Activated CD8-positive, alpha-beta T cell treated with anti-CD3 and anti-CD28 coated beads, Interleukin-2, amount 10 ng/mL, durations not matched to agents 7 days and 5 days (primary cell): ENCODE measurements at regions of chr17 and their contacts with region 1.

Region 1: DNA sequence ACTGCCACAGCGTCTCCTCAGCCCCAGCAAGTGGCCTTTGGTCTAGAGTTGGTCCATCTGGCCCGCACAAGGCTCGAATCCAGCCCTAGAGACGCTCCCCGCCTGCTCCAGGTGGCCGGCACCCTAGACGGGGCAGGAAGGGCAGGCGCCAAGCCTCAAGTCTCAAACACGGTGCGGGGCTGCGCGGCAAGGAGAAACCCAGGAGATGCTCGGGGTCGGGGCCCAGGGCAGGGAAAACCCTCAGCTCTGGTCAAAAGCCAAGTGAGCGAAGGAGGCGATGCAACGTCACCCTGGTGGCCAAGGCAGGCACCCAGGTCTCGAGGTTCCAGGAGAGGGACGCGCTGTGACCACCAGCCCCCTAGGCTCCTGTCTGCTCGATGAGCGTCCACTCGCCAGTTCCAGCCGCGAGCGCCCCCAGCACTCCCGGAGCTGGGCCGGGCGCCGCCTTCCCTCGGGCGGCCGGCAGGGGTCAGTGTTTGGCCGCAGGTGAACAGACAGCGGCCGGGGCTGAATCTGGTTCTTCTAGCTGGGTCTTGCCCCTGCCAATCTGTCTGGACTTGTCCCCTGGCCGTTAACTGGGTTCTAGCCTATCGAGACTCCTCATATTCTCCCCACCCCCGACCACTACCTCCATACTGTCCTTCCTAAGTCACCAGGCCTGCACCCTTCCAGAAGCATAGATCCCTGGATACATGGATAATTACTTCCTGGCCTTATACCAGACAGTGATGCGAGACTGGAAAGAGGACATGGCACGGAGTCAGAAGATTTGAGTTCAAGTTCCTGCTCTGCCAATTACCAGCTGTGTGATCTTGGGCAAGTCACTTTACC is 44.0 kb downstream of the PRAC1 start:
- DNase-seq: peak; percentile 76
- ATAC-seq: peak; percentile 96
- H3K4me3 Mint-ChIP-seq: no peak overlapping the region
- H3K27ac Mint-ChIP-seq: no peak overlapping the region
- H3K4me1 Mint-ChIP-seq: peaks cover 2% of the 10 kb centered on the region
- H3K27me3 Mint-ChIP-seq: peaks cover 54% of the 10 kb centered on the region

Region 2: GRCh38 chr17:48500966-48501426 is 177.4 kb before region 1 on chr17:
- CTCF ChIA-PET with region 1: no interaction called
- POLR2A ChIA-PET with region 1: no interaction called
- DNase-seq: no peak
- ATAC-seq: no peak
- H3K4me3 Mint-ChIP-seq: no peak overlapping the region
- H3K27ac Mint-ChIP-seq: no peak overlapping the region
- H3K4me1 Mint-ChIP-seq: peaks cover 19% of the 10 kb centered on the region
- H3K27me3 Mint-ChIP-seq: peaks cover 40% of the 10 kb centered on the region

Region 3: DNA sequence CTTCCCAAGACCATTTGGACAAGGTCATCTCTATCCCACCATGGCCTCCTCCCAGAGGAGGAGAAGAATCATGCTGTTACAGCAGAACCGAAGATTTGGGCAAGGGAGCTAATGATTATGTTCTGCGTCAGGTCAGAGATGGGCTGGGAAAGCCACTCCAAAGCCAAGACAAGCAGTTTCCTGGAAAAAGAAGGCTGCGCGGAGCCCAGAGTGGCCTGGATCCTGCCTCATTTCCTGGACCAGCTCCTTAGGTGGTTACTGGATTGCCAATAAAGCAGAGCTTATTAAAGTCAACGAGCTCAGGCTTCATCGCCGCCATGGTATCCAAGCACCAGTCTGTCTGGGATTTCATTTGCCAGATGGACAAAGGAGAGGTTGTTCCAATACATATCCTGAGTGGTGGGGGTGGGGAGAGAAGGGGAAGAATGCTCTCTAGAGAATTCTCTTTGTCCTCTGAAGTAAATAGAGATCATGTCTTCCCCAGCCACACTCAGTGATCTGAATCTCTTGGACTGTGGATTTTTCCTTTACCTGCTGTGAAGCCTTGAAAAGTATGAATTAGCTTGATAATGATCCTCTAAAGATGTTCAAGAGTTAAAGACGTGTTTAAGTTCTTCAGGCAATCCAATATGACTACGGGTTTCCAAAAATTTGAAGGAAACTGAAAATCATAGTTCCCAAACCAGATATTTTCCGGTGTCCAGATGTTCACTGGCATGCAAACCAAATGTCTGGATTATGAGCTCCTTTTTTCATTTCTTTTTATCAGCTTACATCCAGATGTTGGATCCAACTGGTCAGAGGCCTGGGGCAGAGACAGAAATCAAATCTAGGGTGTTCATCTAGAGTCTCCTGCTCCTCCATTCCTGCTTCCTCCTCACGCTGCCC is 26.2 kb after region 1 on chr17:
- CTCF ChIA-PET with region 1: interaction called, 35 read pairs
- POLR2A ChIA-PET with region 1: no interaction called
- DNase-seq: no peak
- ATAC-seq: no peak
- H3K4me3 Mint-ChIP-seq: no peak overlapping the region
- H3K27ac Mint-ChIP-seq: no peak overlapping the region
- H3K4me1 Mint-ChIP-seq: no peaks in the 10 kb centered on the region
- H3K27me3 Mint-ChIP-seq: peaks cover 63% of the 10 kb centered on the region

Region 4: DNA sequence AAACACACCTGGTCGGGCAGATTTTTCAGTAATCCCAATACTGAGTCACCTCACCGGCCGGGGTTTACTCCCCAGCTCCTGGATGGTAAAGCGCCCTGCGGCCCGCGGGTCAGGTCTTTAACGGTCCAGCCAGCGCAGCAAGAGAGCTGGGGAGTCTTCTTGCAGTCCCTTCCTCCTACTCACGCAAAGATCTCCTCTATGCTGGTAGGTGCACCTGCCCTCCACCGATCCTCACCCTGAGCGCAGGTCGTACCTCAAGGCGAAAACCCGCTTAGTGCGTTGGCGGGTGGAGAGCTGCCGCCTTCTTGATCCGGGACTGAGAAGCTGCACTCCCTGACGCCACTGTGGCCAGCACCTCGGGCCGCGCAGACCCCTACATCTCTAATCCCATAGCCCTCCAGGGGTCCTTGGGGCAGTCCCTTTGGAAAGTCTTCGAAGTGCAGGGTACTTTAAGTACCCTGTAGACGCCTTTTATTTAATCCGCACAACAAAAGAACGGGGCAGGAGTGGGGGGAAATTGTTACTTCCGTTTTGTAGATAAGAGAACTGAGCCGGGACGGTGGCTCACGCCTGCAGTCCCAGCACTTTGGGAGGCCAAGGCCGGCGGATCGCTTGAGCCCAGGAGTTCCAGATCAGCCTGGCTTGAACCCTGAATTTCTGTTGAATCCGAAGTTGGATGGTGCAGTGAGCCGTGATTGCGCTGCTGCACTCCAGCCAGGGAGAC is 60.6 kb after region 1 on chr17:
- CTCF ChIA-PET with region 1: interaction called, 20 read pairs
- POLR2A ChIA-PET with region 1: no interaction called
- DNase-seq: no peak
- ATAC-seq: no peak
- H3K4me3 Mint-ChIP-seq: peak overlapping the region; percentile 40
- H3K27ac Mint-ChIP-seq: no peak overlapping the region
- H3K4me1 Mint-ChIP-seq: peaks cover 8% of the 10 kb centered on the region
- H3K27me3 Mint-ChIP-seq: peaks cover 87% of the 10 kb centered on the region

Region 5: DNA sequence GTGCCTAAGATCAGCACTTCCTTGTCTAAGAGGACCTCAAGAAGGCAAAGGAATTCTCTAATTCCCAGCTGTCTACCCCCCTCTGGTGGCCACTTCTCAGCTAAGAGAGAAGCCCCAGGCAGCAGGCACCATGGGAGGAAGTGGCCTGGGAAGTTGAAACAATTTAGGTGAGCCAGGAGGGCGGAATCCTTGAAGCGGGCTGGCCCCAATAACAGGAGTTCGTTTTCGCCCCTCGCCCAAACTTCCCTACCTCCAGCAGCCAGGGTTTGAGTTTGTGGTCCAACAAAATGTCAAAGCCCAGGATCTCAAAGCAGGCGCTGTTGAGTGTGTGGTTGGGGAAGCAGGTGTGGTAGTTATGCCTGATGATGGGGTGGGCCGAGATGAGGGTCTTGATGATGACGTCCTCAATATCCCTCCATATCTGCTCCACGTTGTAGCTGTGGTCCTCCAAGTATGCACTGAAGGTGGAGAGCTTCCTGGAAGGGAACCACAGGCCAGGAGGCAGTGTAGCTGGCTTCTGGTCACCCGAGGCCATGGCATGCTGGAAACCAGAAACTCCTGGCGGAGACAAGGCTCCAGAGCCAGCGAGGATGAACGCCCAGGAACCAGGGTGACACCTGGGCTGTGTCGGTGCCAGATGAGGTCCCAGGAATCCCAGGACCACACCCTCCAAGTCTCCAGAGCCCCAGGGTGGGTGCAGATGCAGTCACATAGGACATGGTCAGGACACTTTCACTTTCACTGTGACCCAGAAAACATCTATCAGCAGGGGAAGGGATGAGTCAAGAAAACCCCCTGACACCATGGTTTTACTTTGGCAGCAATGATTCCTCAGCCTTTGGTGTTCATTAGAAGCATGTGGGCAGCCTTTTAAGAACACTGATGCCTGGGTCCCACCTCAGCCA is 113.0 kb after region 1 on chr17:
- CTCF ChIA-PET with region 1: interaction called, 37 read pairs
- POLR2A ChIA-PET with region 1: no interaction called
- DNase-seq: peak; percentile 45
- ATAC-seq: peak; percentile 74
- H3K4me3 Mint-ChIP-seq: no peak overlapping the region
- H3K27ac Mint-ChIP-seq: no peak overlapping the region
- H3K4me1 Mint-ChIP-seq: peaks cover 18% of the 10 kb centered on the region
- H3K27me3 Mint-ChIP-seq: peaks cover 29% of the 10 kb centered on the region

Region 6: DNA sequence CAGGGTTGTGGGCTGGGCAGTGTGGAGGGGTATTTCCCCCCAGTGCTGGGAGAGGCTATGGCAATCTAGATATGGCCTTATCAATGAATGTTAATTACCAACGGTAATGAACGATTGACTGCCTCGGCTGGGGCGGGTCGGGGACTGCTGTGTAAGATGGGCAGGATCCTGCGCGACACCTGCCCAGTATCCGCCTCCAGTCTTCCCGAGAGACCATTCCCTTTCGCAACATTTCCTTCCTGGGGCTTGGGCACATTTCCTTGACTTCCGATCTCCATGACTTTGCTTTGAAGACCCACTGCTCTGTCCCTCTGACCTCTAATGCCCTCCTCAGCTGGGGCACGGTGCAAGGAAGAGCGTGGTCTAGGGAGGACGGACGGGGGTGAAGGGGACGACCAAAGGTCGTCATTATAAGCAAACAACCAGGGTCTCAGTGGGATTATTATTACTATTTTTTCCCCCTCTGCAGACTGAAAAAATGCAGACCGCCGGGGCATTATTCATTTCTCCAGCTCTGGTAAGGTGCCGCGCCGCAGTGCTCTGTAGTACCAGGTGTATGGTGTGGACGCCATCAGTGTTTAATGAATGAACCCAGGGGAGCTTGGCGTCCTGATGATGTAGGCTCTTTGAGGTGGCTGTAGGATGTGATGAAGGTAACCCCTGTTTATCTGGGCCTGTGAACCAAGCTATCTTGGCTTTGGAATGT is 214.7 kb after region 1 on chr17:
- CTCF ChIA-PET with region 1: interaction called, 14 read pairs
- POLR2A ChIA-PET with region 1: no interaction called
- DNase-seq: peak; percentile 28
- ATAC-seq: no peak
- H3K4me3 Mint-ChIP-seq: peak overlapping the region; percentile 89
- H3K27ac Mint-ChIP-seq: peak overlapping the region; percentile 88
- H3K4me1 Mint-ChIP-seq: peaks cover 38% of the 10 kb centered on the region
- H3K27me3 Mint-ChIP-seq: no peaks in the 10 kb centered on the region